ENCODE measurements at regions of chr6 and their contacts with region 1.

Region 1: DNA sequence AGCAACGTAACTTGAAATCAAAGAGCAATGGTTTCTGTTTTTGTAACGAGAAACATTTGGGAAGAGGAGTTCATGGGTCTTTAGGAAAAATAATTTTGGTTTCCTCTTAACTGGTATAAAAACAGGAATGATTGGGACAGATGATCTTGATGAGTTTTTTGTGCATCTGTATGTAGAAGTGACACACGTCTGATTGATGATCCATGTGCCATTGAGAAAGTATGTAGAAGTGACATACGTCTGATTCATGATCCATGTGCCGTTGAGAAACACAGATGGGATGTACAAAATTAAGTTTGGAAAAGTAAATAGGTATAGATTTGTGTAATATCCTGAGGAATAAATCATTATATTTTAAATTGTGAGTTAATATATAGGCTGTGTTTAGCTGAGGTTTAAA is 2.1 kb downstream of the KIAA1586 start:
- DNase-seq: no peak
- H3K4me3 ChIP-seq: no peak overlapping the region
- H3K27ac ChIP-seq: no peak overlapping the region
- H3K4me1 ChIP-seq: peaks cover 4 to 23% (median 18%) of the 10 kb centered on the region in 4 donors
- H3K27me3 ChIP-seq: no peaks in the 10 kb centered on the region
- CTCF ChIP-seq: no peak
- EP300 ChIP-seq: no peak
- POLR2A ChIP-seq: no peak

Region 2: GRCh38 chr6:57089687-57090460 is 41.3 kb after region 1 on chr6 and contains the start of gene ZNF451:
- intact Hi-C with region 1: loop called (anchors 5 kb)
- DNase-seq: peak; percentile 99
- H3K4me3 ChIP-seq: peak within 1 kb of the TSS; percentile 60 to 73 (median 62)
- H3K27ac ChIP-seq: peak within 1 kb of the TSS; percentile 83 to 90 (median 86)
- H3K4me1 ChIP-seq: peaks cover 23 to 41% (median 37%) of the 10 kb centered on the region in 4 donors
- H3K27me3 ChIP-seq: no peaks in the 10 kb centered on the region
- CTCF ChIP-seq: peak in 1 of 3 experiments; percentile 40
- EP300 ChIP-seq: no peak
- POLR2A ChIP-seq: peak; percentile 75
- total RNA-seq, gene ZNF451: 32.0 to 49.0 (median 38.0) TPM

Region 3: GRCh38 chr6:57224769-57225515 is 176.4 kb after region 1 on chr6:
- intact Hi-C with region 1: no loop called
- DNase-seq: no peak
- H3K4me3 ChIP-seq: no peak overlapping the region
- H3K27ac ChIP-seq: no peak overlapping the region
- H3K4me1 ChIP-seq: peaks cover 6 to 20% (median 9%) of the 10 kb centered on the region in 4 donors
- H3K27me3 ChIP-seq: no peaks in the 10 kb centered on the region
- CTCF ChIP-seq: no peak
- EP300 ChIP-seq: no peak
- POLR2A ChIP-seq: no peak

Region 4: GRCh38 chr6:57324538-57324937 is 276.0 kb after region 1 on chr6:
- intact Hi-C with region 1: loop called (anchors 5 kb)
- DNase-seq: no peak
- H3K4me3 ChIP-seq: no peak overlapping the region
- H3K27ac ChIP-seq: no peak overlapping the region
- H3K4me1 ChIP-seq: no peaks in the 10 kb centered on the region
- H3K27me3 ChIP-seq: no peaks in the 10 kb centered on the region
- CTCF ChIP-seq: peak; percentile 43 to 63 (median 52)
- EP300 ChIP-seq: no peak
- POLR2A ChIP-seq: no peak

Measured in esophagus muscularis mucosa (tissue), 4 donors.